ENCODE measurements at regions of chr7 and their contacts with region 1.

Region 1: GRCh38 chr7:150514748-150515222 is at the start of gene GIMAP7:
- DNase-seq: peak; percentile 72
- ATAC-seq: peak; percentile 80
- H3K4me3 Mint-ChIP-seq: peak within 1 kb of the TSS; percentile 98
- H3K27ac Mint-ChIP-seq: peak within 1 kb of the TSS; percentile 99
- H3K4me1 Mint-ChIP-seq: peaks cover 46% of the 10 kb centered on the region
- H3K27me3 Mint-ChIP-seq: no peaks in the 10 kb centered on the region
- CTCF ChIP-seq: no peak
- total RNA-seq, gene GIMAP7: 29.0 to 29.5 TPM

Region 2: DNA sequence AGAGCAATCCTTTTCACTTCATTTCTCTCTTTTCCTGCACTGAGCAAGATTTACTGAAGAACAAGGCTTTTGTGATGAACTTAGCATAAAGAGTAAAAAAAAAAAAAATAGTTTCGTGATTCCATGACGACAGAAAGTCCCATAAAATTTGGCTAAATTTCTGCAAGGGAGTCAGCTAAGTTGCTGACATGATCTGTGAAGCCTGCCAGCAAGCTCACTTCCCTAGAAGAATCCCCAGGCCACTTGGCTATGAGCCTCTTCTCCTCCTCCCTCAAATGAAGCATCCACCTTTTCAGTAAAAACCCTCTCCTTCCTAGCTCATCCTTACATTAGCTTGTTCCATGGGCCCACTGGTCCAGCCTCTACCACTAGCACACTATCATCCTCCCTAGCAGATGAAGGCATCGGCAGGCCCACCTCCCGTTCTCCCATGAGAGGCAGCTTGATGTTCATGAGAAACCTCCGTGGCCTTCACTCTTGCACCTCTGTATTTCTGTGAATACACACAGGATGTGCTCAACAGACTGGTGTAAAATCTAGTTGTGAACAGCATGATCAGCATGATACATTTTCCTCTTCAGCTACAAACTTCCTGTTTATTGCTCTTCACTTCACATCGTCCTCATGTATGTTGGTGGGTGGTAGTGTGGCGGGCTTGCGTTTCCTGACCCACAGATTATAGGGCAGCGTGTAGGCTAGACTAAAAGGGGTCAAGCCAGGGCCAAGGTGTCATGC is 33.4 kb before region 1 on chr7:
- CTCF ChIA-PET with region 1: interaction called, 5 read pairs
- POLR2A ChIA-PET with region 1: interaction called, 18 read pairs
- intact Hi-C with region 1: loop called (anchors 5 kb)
- DNase-seq: peak; percentile 74
- ATAC-seq: peak; percentile 74
- H3K4me3 Mint-ChIP-seq: peak overlapping the region; percentile 67
- H3K27ac Mint-ChIP-seq: peak overlapping the region; percentile 97
- H3K4me1 Mint-ChIP-seq: peaks cover 92% of the 10 kb centered on the region
- H3K27me3 Mint-ChIP-seq: no peaks in the 10 kb centered on the region
- CTCF ChIP-seq: no peak

Region 3: GRCh38 chr7:150502519-150502918 is 12.3 kb before region 1 on chr7:
- CTCF ChIA-PET with region 1: interaction called, 14 read pairs
- POLR2A ChIA-PET with region 1: interaction called, 36 read pairs
- intact Hi-C with region 1: no loop called
- DNase-seq: peak; percentile 70
- ATAC-seq: peak; percentile 75
- H3K4me3 Mint-ChIP-seq: peak overlapping the region; percentile 4
- H3K27ac Mint-ChIP-seq: peak overlapping the region; percentile 92
- H3K4me1 Mint-ChIP-seq: peaks cover 68% of the 10 kb centered on the region
- H3K27me3 Mint-ChIP-seq: no peaks in the 10 kb centered on the region
- CTCF ChIP-seq: no peak

Region 4: DNA sequence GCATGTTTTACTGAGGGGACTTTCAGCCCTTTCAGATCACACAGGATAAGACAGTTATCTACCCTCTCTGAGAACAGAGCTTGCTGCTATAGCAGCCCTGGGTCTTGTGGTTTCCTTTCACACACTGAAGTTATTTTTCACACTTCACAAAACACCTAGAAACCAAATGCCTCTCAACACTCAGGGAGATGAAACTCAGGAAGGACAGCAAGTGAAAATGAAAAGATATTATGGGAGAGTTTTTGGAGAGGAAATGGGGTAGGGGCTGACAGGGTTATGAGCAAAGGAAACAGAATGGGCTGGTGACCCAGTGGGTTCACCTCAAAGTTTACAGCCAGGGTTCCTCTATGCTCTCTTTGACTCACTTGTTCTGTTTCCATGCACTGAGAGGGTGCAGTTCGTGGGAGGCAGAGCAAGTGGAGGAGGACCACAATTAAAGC is 153.7 kb after region 1 on chr7:
- CTCF ChIA-PET with region 1: interaction called, 3 read pairs
- POLR2A ChIA-PET with region 1: interaction called, 6 read pairs
- intact Hi-C with region 1: loop called (anchors 5 kb)
- DNase-seq: peak; percentile 85
- ATAC-seq: peak; percentile 73
- H3K4me3 Mint-ChIP-seq: peak overlapping the region; percentile 54
- H3K27ac Mint-ChIP-seq: peak overlapping the region; percentile 97
- H3K4me1 Mint-ChIP-seq: peaks cover 86% of the 10 kb centered on the region
- H3K27me3 Mint-ChIP-seq: no peaks in the 10 kb centered on the region
- CTCF ChIP-seq: no peak

Region 5: GRCh38 chr7:150703209-150703608 is 188.4 kb after region 1 on chr7:
- CTCF ChIA-PET with region 1: no interaction called
- POLR2A ChIA-PET with region 1: no interaction called
- intact Hi-C with region 1: no loop called
- DNase-seq: no peak
- ATAC-seq: no peak
- H3K4me3 Mint-ChIP-seq: no peak overlapping the region
- H3K27ac Mint-ChIP-seq: no peak overlapping the region
- H3K4me1 Mint-ChIP-seq: peaks cover 4% of the 10 kb centered on the region
- H3K27me3 Mint-ChIP-seq: no peaks in the 10 kb centered on the region
- CTCF ChIP-seq: no peak

Measured in activated CD8-positive, alpha-beta T cell treated with anti-CD3 and anti-CD28 coated beads for 36 hours (primary cell).